Activated CD8-positive, alpha-beta memory T cell treated with anti-CD3 and anti-CD28 coated beads, Interleukin-2, amount 10 ng/mL, durations not matched to agents 7 days and 5 days (primary cell): ENCODE measurements at regions of chr16 and their contacts with region 1.

Region 1: GRCh38 chr16:2500918-2501750 is 12.6 kb upstream of the ATP6V0C start:
- DNase-seq: peak; percentile 84
- ATAC-seq: peak; percentile 98
- H3K4me3 Mint-ChIP-seq: no peak overlapping the region
- H3K27ac Mint-ChIP-seq: no peak overlapping the region
- H3K4me1 Mint-ChIP-seq: no peaks in the 10 kb centered on the region
- H3K27me3 Mint-ChIP-seq: no peaks in the 10 kb centered on the region

Region 2: DNA sequence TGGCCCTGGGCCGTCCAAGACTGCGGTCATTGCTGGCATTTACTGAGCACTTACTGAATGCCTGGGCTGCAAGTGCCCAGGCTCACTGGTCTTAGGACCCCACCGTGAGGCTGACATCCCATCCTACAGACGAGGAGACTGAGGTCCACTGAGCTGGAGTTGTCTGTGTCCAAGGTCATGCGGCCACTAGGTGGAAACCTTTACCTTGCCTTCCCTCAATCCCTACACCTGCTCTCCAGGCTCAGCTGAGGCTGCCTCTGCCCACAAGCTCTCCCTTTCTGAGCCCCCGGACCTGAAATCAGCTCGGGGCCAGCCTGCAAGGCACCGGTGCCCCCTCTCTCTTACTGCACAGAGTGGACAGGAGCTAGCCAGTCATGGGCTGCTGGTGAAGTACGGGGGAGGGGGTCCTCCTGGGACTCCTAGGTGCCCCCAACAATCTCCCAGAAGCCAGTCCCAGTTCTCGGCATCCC is 306.2 kb before region 1 on chr16:
- CTCF ChIA-PET with region 1: interaction called, 16 read pairs
- DNase-seq: peak; percentile 69
- ATAC-seq: peak; percentile 75
- H3K4me3 Mint-ChIP-seq: no peak overlapping the region
- H3K27ac Mint-ChIP-seq: no peak overlapping the region
- H3K4me1 Mint-ChIP-seq: no peaks in the 10 kb centered on the region
- H3K27me3 Mint-ChIP-seq: peaks cover 41% of the 10 kb centered on the region

Region 3: DNA sequence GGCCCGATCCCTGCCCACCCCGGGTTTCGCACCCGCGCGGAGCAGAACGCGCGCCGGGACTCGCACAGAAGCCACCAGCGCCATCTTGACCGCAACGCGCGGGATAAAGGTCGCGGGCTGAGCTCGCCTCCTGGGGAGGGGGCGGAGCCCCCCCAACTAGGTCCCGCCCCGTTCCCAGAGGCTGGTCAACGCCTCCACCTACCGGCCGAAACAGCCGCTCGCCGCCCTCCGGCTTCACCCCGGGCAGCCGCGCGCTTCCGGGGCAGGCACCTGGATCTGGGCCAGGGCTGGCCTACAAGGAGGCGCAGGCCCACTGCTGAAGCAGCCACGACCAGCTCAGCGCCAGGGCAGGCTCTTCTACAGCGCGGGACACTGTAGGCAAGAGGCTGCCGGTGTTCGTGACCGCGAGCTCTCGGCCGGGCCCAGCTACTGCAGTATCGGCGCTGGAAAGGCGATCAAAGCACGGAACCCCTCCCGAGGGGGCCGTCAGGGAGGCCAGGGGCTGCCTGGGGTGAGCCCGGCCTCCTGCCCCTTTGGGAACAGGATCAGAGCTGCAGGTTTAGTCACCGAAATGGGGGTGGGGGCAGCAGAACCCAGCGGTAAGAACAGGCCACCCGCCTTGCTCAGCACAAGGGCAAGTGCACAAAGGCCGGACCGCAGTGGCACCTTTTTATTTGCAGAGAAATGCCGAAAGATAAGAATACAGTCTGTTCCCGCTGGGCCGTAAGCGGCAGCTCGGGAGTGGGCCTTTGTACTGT is 249.5 kb before region 1 on chr16 and contains the start of gene ECI1:
- CTCF ChIA-PET with region 1: interaction called, 14 read pairs
- DNase-seq: peak; percentile 93
- ATAC-seq: peak; percentile 92
- H3K4me3 Mint-ChIP-seq: peak within 1 kb of the TSS; percentile 89
- H3K27ac Mint-ChIP-seq: peak within 1 kb of the TSS; percentile 91
- H3K4me1 Mint-ChIP-seq: peaks cover 11% of the 10 kb centered on the region
- H3K27me3 Mint-ChIP-seq: no peaks in the 10 kb centered on the region
- total RNA-seq, gene ECI1: 48.9 to 57.3 TPM

Region 4: GRCh38 chr16:2388875-2389433 is 112.2 kb before region 1 on chr16:
- CTCF ChIA-PET with region 1: no interaction called
- DNase-seq: no peak
- ATAC-seq: no peak
- H3K4me3 Mint-ChIP-seq: no peak overlapping the region
- H3K27ac Mint-ChIP-seq: no peak overlapping the region
- H3K4me1 Mint-ChIP-seq: no peaks in the 10 kb centered on the region
- H3K27me3 Mint-ChIP-seq: peaks cover 3% of the 10 kb centered on the region

Region 5: GRCh38 chr16:2429034-2429770 is 71.9 kb before region 1 on chr16 and contains the start of gene CCNF:
- CTCF ChIA-PET with region 1: interaction called, 10 read pairs
- DNase-seq: peak; percentile 98
- ATAC-seq: peak; percentile 96
- H3K4me3 Mint-ChIP-seq: peak within 1 kb of the TSS; percentile 98
- H3K27ac Mint-ChIP-seq: peak within 1 kb of the TSS; percentile 84
- H3K4me1 Mint-ChIP-seq: peaks cover 33% of the 10 kb centered on the region
- H3K27me3 Mint-ChIP-seq: no peaks in the 10 kb centered on the region
- total RNA-seq, gene CCNF: 84.2 to 103 TPM

Region 6: GRCh38 chr16:2459647-2460390 is 41.3 kb before region 1 on chr16 and contains the start of gene TEDC2:
- CTCF ChIA-PET with region 1: interaction called, 12 read pairs
- DNase-seq: peak; percentile 98
- ATAC-seq: peak; percentile 98
- H3K4me3 Mint-ChIP-seq: peak within 1 kb of the TSS; percentile 73
- H3K27ac Mint-ChIP-seq: peak within 1 kb of the TSS; percentile 73
- H3K4me1 Mint-ChIP-seq: peaks cover 21% of the 10 kb centered on the region
- H3K27me3 Mint-ChIP-seq: no peaks in the 10 kb centered on the region
- total RNA-seq, gene TEDC2: 24.9 to 27.5 TPM

Region 7: DNA sequence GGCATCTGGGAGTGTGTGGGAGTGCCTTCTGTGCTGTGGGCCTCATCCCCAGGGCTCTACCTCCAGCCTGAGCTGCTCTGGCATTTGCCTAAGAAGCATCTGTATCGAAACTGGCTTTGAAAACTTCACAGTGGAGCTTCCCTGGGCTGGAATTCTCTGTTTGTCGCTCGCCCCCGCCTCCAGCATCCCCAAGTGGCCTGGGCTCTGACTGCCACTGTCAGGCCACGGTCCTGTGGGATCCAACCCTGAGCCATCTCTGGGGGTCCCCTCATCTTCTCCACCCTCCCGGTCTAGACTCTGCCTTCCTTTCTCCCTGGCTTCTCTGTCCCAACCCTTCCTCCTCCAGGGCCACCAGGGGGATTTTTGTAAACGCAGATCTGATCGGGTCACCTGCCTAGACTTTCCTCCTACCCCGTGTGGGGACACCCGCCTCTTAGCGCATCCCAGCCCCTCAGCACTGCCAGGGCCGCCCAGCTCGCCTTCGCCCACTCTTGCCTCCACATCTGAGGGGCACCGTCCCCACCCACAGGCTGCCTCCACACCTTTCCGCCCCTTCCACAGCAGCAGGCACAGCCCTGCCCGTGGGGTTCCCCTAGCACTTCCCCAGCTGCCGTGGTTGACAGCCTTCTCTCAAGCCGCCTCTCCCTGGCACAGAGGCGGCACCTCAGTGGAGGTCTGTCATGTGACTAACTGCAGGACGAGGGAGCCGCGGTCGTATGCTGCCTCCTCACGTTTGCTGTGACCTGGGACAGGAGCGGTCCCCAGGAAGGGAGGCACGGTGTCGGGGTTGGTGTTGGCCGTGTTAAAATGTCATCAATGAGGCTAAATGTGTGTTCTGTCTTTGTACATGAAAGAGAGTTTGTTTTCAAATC is 14.3 kb before region 1 on chr16:
- CTCF ChIA-PET with region 1: interaction called, 10 read pairs
- DNase-seq: peak; percentile 76
- ATAC-seq: peak; percentile 86
- H3K4me3 Mint-ChIP-seq: no peak overlapping the region
- H3K27ac Mint-ChIP-seq: no peak overlapping the region
- H3K4me1 Mint-ChIP-seq: peaks cover 17% of the 10 kb centered on the region
- H3K27me3 Mint-ChIP-seq: no peaks in the 10 kb centered on the region

Region 8: GRCh38 chr16:2513405-2514322 is 12.5 kb after region 1 on chr16 and contains the start of gene ATP6V0C:
- CTCF ChIA-PET with region 1: interaction called, 13 read pairs
- DNase-seq: peak; percentile 93
- ATAC-seq: peak; percentile 89
- H3K4me3 Mint-ChIP-seq: peak within 1 kb of the TSS; percentile 90
- H3K27ac Mint-ChIP-seq: peak within 1 kb of the TSS; percentile 97
- H3K4me1 Mint-ChIP-seq: peaks cover 49% of the 10 kb centered on the region
- H3K27me3 Mint-ChIP-seq: no peaks in the 10 kb centered on the region
- total RNA-seq, gene ATP6V0C: 104 to 121 TPM

Region 9: DNA sequence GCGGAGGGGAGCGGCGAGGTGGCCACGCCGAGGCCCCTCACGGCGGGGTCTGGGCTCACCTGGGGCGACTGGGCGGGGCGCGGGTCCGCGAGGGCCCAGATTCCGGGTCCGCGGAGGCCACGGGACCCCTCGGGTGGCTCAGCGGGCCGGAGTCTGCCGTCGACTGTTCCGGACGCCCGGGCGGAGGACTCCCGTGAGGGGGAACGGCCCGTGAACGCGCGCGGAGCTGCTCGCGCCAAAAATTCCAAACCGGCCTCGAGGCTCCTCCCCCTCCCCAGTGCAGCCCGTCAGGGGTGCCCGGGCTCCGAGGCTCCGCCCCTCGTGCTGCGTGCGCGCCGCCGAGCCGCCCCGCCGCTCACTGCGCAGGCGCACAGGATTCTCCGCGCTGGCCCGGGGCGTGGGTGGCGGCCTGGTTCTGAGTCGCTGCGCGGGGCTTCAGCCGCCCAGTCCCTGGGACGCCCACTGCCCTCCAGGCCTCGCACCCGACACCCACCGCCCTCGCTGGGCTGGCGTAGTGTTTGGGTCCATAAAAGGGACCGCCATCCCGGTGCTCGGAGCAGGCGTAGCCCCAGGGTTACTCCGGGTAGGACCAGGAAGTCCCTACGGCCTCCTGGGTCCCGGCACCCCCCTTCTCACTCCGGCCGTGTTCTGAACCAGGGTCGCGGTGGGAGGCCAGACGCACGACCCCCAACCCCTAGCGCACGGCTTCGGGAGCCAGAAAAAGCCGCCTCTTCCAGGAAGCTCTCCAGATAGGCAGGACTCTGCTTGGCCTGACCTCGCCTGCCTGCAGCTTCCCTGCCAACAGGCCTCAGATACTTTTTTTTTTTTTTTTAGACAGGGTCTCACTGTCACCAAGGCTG is 479.3 kb after region 1 on chr16 and contains the start of gene PKMYT1:
- CTCF ChIA-PET with region 1: no interaction called
- DNase-seq: peak; percentile 96
- ATAC-seq: peak; percentile 90
- H3K4me3 Mint-ChIP-seq: peak within 1 kb of the TSS; percentile 93
- H3K27ac Mint-ChIP-seq: peak within 1 kb of the TSS; percentile 86
- H3K4me1 Mint-ChIP-seq: peaks cover 33% of the 10 kb centered on the region
- H3K27me3 Mint-ChIP-seq: peaks cover 4% of the 10 kb centered on the region
- total RNA-seq, gene PKMYT1: 146 to 199 TPM